Activated naive CD4-positive, alpha-beta T cell treated with anti-CD3 and anti-CD28 coated beads for 36 hours (primary cell): ENCODE measurements at regions of chr10 and their contacts with region 1.

Region 1: DNA sequence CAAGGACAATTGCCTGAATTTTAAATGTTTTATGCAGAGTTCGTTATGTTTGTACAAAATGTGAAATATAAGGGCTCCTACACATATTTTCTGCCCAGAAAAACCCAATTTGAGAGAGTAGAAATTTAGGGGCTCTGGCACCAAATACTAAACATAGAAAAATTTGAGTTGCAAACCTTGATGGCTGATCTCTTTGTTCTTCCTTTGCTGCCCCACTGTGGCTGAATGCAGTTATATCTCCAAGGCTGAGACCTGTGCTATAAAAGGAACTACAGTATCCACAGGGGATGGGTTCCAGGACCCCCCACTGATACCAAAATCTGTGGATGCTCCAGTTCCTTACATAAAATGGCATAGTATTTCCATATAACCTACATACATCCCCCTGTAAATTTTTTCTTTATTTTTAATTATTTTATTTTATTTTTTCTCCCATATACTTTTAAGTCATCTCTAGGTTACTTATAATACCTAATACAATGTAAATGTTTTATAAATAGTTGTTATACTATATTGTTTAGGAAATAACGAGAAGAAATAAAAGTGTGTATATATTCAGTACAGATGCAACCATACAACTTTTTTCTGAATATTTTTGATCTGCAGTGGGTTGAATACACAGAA is 22.5 kb downstream of the CFAP43 start:
- DNase-seq: peak; percentile 67
- H3K4me3 Mint-ChIP-seq: no peak overlapping the region
- H3K27ac Mint-ChIP-seq: no peak overlapping the region
- H3K4me1 Mint-ChIP-seq: no peaks in the 10 kb centered on the region
- H3K27me3 Mint-ChIP-seq: no peaks in the 10 kb centered on the region

Region 2: GRCh38 chr10:104045151-104046089 is 164.3 kb before region 1 on chr10:
- CTCF ChIA-PET with region 1: no interaction called
- intact Hi-C with region 1: loop called (anchors 1 kb)
- DNase-seq: peak; percentile 37
- H3K4me3 Mint-ChIP-seq: no peak overlapping the region
- H3K27ac Mint-ChIP-seq: no peak overlapping the region
- H3K4me1 Mint-ChIP-seq: no peaks in the 10 kb centered on the region
- H3K27me3 Mint-ChIP-seq: no peaks in the 10 kb centered on the region

Region 3: GRCh38 chr10:104844073-104844472 is 634.4 kb after region 1 on chr10:
- CTCF ChIA-PET with region 1: no interaction called
- intact Hi-C with region 1: no loop called
- DNase-seq: no peak
- H3K4me3 Mint-ChIP-seq: no peak overlapping the region
- H3K27ac Mint-ChIP-seq: no peak overlapping the region
- H3K4me1 Mint-ChIP-seq: no peaks in the 10 kb centered on the region
- H3K27me3 Mint-ChIP-seq: no peaks in the 10 kb centered on the region